ENCODE measurements at regions of chr1 and their contacts with region 1.

Region 1: DNA sequence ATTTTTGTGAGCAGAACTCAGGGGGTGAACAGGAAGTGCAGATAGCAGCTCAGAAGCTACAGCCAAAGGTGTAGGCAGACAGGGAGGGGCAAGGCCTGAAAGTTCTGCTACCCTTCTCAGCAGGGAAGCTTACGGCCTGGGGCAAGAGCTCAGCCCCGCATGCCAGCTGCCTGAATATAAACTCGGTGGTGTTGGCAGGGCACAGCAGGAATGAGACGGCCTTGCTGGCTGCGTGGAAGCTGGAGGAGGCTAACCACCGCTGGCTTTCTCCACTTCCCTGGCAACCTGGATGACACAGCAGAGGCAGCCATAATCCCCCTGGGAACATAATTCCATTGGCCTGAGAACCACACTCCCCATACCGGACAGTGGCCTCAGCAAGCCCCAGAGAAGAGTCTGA is 82.0 kb upstream of the PRRC2C start:
- DNase-seq: no peak
- H3K4me3 Mint-ChIP-seq: no peak overlapping the region
- H3K27ac Mint-ChIP-seq: peak overlapping the region; percentile 13
- H3K4me1 Mint-ChIP-seq: peaks cover 24% of the 10 kb centered on the region
- H3K27me3 Mint-ChIP-seq: no peaks in the 10 kb centered on the region
- CTCF ChIP-seq: no peak

Region 2: GRCh38 chr1:170967042-170967910 is 436.1 kb before region 1 on chr1:
- CTCF ChIA-PET with region 1: no interaction called
- intact Hi-C with region 1: loop called (anchors 10 kb)
- DNase-seq: peak; percentile 18
- H3K4me3 Mint-ChIP-seq: no peak overlapping the region
- H3K27ac Mint-ChIP-seq: no peak overlapping the region
- H3K4me1 Mint-ChIP-seq: no peaks in the 10 kb centered on the region
- H3K27me3 Mint-ChIP-seq: peaks cover 11% of the 10 kb centered on the region
- CTCF ChIP-seq: peak; percentile 46

Region 3: DNA sequence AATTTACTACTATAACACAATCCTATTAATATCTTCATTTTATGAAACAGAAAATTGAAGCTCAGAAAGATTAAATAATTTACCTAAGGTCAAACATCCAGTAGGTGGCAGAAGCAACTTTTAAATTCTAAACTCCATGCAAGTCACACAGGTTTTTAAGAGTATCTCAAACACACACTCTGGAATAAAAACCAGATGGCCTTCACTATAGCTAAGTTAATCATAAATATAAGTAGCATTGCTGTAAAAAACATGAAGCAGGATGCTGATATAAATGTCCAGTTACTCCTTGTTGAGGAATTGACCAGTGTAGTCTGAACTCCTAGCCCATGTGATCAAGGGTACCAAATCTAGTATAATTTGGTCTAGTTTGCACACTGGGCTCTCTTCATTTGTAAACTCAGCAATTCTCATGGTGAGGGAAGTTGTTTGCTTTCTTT is 322.0 kb before region 1 on chr1:
- CTCF ChIA-PET with region 1: no interaction called
- intact Hi-C with region 1: loop called (anchors 5 kb)
- DNase-seq: no peak
- H3K4me3 Mint-ChIP-seq: no peak overlapping the region
- H3K27ac Mint-ChIP-seq: no peak overlapping the region
- H3K4me1 Mint-ChIP-seq: no peaks in the 10 kb centered on the region
- H3K27me3 Mint-ChIP-seq: peaks cover 14% of the 10 kb centered on the region
- CTCF ChIP-seq: no peak

Region 4: GRCh38 chr1:171245458-171246064 is 157.8 kb before region 1 on chr1:
- CTCF ChIA-PET with region 1: interaction called, 7 read pairs
- intact Hi-C with region 1: loop called (anchors 1 kb)
- DNase-seq: peak; percentile 59
- H3K4me3 Mint-ChIP-seq: no peak overlapping the region
- H3K27ac Mint-ChIP-seq: no peak overlapping the region
- H3K4me1 Mint-ChIP-seq: no peaks in the 10 kb centered on the region
- H3K27me3 Mint-ChIP-seq: peaks cover 42% of the 10 kb centered on the region
- CTCF ChIP-seq: peak; percentile 62

Measured in Calu3 (cell line).